Natural killer cell (primary cell): ENCODE measurements at regions of chr20 and their contacts with region 1.

Region 1: DNA sequence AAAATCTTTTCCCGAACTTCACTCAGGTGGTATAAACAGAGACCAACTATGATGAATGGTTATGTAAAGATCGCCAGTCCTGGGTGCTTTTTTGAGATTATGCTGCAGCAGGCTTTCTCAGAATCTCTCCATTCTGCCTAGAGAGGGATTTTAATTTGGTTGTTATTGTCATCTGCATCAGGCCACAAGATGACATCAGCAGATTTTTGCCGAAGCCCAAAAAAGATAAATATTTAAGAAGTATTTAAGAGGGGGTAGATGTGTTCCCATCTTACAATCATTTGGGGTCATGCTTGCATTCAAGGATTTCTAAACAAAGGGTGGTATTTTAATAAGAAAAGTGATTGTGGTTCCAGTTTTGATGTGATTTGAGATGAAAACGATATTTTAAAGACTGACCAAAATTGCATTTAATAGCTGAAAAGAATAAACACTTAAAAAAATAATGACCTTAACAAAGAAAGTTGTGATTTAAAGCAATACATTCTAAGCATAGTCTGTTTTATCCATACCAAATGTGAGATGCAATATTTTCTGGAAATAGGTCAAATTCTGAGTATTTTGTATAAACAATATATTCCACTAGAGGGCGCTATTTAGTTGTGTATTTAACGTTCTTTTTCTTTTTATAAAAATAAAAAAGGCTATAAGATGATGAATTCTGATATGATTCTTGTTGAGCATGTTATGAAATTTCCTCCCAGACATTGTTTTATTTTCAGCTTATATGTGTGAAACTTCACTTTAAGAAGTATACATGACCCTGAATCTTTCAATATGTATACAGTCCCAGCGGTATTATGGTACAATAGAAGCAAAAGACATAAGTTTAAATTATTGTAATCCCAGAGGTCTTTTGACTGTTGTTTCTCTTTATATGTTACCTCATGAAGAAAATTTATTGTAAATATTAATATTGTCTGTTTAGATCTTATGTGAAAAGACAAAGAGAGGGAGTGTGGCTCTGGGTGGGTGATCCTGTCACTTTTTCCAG is 51.0 kb upstream of the ZFP64 start:
- DNase-seq: peak in 1 of 2 donors; percentile 44
- ATAC-seq: no peak
- H3K4me3 ChIP-seq: no peak overlapping the region
- H3K4me3 Mint-ChIP-seq: no peak overlapping the region
- H3K27ac ChIP-seq: no peak overlapping the region
- H3K27ac Mint-ChIP-seq: no peak overlapping the region
- H3K4me1 ChIP-seq: no peaks in the 10 kb centered on the region
- H3K4me1 Mint-ChIP-seq: no peaks in the 10 kb centered on the region
- H3K27me3 ChIP-seq: peaks cover 2% of the 10 kb centered on the region
- H3K27me3 Mint-ChIP-seq: peaks cover 5 to 7% of the 10 kb centered on the region in 2 donors
- CTCF ChIP-seq: peak; percentile 89

Region 2: GRCh38 chr20:53216856-53217576 is 974.5 kb after region 1 on chr20:
- intact Hi-C with region 1: loop called (anchors 2 kb)
- DNase-seq: peak; percentile 67 to 87
- ATAC-seq: peak; percentile 63 to 94 (median 86)
- H3K4me3 ChIP-seq: no peak overlapping the region
- H3K4me3 Mint-ChIP-seq: peak overlapping the region; percentile 17
- H3K27ac ChIP-seq: no peak overlapping the region
- H3K27ac Mint-ChIP-seq: no peak overlapping the region
- H3K4me1 ChIP-seq: peaks cover 4% of the 10 kb centered on the region
- H3K4me1 Mint-ChIP-seq: no peaks in the 10 kb centered on the region
- H3K27me3 ChIP-seq: peaks cover 3% of the 10 kb centered on the region
- H3K27me3 Mint-ChIP-seq: peaks cover 16 to 42% of the 10 kb centered on the region in 2 donors
- CTCF ChIP-seq: peak; percentile 96